Ovary (tissue), 10 donors: ENCODE measurements at regions of chr1 and their contacts with region 1.

Region 1: DNA sequence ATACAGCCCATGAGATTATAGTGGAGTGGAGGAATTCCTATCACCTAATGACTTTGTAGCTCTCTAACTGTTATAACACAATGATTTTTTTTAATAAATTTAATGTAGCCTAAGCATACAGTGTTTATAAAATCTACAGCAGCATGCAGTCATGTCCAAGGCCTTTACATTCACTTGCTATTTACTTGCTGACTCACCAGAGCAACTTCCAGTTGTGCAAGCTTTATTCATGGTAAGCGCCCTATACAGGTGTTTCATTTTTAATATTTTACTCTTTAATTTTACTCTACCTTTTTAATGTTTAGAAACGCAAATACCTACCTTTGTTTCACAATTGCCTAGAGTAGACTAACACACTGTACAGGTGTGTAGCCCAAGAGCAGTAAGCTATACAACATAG is 1652.2 kb downstream of the BRINP3 start:
- DNase-seq: no peak
- H3K4me3 ChIP-seq: no peak overlapping the region
- H3K27ac ChIP-seq: no peak overlapping the region
- H3K4me1 ChIP-seq: no peaks in the 10 kb centered on the region
- H3K27me3 ChIP-seq: no peaks in the 10 kb centered on the region
- CTCF ChIP-seq: no peak
- EP300 ChIP-seq: no peak
- POLR2A ChIP-seq: no peak

Region 2: GRCh38 chr1:188689543-188689942 is 135.9 kb before region 1 on chr1:
- intact Hi-C with region 1: no loop called
- DNase-seq: no peak
- H3K4me3 ChIP-seq: no peak overlapping the region
- H3K27ac ChIP-seq: no peak overlapping the region
- H3K4me1 ChIP-seq: no peaks in the 10 kb centered on the region
- H3K27me3 ChIP-seq: no peaks in the 10 kb centered on the region
- CTCF ChIP-seq: no peak
- EP300 ChIP-seq: no peak
- POLR2A ChIP-seq: no peak

Region 3: DNA sequence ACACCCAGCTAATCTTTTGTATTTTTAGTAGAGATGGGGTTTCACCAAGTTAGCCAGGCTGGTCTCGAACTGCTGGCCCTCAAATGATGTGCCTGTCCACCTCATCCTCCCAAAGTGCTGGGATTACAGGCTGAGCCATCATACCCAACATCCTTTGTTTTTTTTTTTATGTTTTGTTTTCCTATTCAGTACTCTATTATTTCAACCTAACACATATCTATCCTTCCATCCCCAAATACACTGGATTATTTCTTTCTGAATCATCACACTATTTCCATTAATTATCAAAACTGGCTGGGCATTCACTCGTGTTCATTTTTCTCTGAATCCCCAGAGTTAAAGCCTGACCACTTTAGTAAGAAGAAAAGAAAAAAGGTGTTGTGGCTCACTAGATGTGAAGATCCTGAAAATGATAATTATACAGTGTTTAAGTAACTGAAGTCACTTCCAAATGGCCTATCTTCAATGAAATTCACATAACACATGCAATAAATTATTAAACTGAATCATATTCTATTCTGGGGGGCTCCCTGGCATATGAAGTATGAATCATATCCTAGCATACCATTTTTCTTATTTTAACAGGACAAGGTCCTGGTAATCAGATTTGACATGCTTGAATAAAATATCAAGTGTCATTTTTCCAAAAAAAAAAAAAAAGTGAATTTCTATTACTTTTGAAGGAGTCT is 102.0 kb before region 1 on chr1:
- intact Hi-C with region 1: no loop called
- DNase-seq: no peak
- H3K4me3 ChIP-seq: no peak overlapping the region
- H3K27ac ChIP-seq: no peak overlapping the region
- H3K4me1 ChIP-seq: no peaks in the 10 kb centered on the region
- H3K27me3 ChIP-seq: no peaks in the 10 kb centered on the region
- CTCF ChIP-seq: no peak
- EP300 ChIP-seq: no peak
- POLR2A ChIP-seq: no peak

Region 4: GRCh38 chr1:189929512-189930099 is 1104.1 kb after region 1 on chr1:
- intact Hi-C with region 1: no loop called
- DNase-seq: no peak
- H3K4me3 ChIP-seq: no peak overlapping the region
- H3K27ac ChIP-seq: no peak overlapping the region
- H3K4me1 ChIP-seq: no peaks in the 10 kb centered on the region
- H3K27me3 ChIP-seq: no peaks in the 10 kb centered on the region
- CTCF ChIP-seq: no peak
- EP300 ChIP-seq: no peak
- POLR2A ChIP-seq: no peak

Region 5: DNA sequence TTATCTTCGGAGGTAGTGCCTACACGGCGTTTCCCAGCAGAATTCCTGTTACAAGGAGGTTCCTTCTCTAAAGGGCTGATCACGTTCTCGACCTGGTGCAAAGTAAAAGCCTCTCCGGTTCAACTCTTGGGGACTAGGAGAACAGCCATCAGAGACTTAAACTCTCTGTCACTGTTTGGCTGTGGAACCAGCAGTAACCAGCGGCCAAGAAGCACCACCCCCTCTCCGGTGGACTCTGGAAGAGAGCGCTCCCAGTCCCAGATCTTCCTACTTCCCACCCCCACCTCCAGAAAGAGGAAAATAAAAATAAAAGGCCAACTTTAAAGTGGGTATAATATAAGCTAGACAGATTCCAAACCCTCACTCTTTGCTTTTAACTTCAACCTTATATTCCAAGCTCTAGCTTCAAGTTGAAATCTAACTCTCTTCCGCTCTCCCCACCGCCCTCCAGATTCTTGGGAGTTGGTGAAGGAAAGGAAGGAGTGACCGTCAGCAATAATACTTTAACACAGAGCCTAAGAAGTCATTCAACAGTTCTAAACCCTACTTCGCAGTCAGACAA is 1649.3 kb after region 1 on chr1:
- intact Hi-C with region 1: loop called in 1 of 4 experiments (anchors 5 kb)
- DNase-seq: no peak
- H3K4me3 ChIP-seq: no peak overlapping the region
- H3K27ac ChIP-seq: no peak overlapping the region
- H3K4me1 ChIP-seq: no peaks in the 10 kb centered on the region
- H3K27me3 ChIP-seq: no peaks in the 10 kb centered on the region
- CTCF ChIP-seq: no peak
- EP300 ChIP-seq: no peak
- POLR2A ChIP-seq: no peak